Common myeloid progenitor, CD34-positive (primary cell): ENCODE measurements at regions of chr13 and their contacts with region 1.

Region 1: DNA sequence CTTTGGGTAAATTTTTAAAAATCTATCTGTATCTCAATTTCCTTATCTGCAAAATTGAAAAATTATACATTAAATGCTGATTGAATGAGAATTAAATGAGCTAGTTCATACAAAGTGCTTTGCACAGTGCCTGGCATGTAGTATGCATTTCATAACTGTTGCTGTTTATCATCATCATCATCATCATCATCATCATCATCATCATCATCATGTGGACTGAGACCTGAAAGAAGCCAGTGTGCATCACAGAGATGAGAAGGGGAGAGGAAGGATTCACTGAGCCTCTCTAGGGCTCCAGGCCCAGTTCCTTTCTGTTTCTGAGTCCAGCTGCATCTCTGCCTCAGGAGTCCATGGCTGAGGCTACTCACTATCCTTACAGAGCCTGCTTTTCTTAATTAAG is 6.9 kb upstream of the ZC3H13 start:
- DNase-seq: no peak
- H3K4me3 ChIP-seq: no peak overlapping the region
- H3K27ac ChIP-seq: no peak overlapping the region
- H3K4me1 ChIP-seq: peaks cover 0 to 11% (median 6%) of the 10 kb centered on the region in 4 experiments
- H3K27me3 ChIP-seq: no peaks in the 10 kb centered on the region

Region 2: DNA sequence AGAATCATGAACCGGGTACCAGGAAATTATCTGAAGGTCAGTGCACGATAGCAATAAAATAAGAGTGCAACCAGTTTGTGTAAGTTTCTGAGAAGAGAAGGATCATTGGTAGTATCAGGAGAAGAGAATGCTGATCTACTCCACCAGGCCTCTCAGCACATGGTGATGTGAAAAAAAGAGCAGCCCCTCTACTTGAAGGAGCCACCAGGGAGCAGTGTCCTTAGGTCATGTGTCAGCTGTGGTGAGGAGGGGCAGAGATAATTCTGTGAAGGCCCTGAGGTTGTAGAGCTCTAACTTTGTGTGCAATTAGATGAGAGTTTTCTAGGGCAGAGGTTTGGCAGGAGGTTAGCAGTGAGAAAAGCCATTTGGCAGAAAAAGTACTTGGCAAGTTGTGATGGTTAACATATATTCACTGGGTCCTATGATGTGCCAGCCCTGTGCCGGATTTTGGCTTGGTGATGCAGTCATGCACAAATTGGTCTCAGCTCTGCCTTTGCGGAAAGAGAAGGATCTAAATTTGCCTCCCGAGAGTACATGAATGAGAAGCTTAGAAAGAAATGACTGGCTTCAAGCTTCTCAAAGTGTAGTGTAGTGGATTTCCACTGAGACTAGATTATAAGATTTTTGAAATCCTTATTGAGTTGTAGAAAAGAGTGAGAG is 12.3 kb after region 1 on chr13:
- CTCF ChIA-PET with region 1: interaction called, 10 read pairs
- POLR2A ChIA-PET with region 1: no interaction called
- DNase-seq: peak in 2 of 3 donors; percentile 50 to 67
- H3K4me3 ChIP-seq: no peak overlapping the region
- H3K27ac ChIP-seq: no peak overlapping the region
- H3K4me1 ChIP-seq: no peaks in the 10 kb centered on the region
- H3K27me3 ChIP-seq: no peaks in the 10 kb centered on the region

Region 3: GRCh38 chr13:46086990-46087389 is 27.6 kb after region 1 on chr13:
- CTCF ChIA-PET with region 1: no interaction called
- POLR2A ChIA-PET with region 1: no interaction called
- DNase-seq: no peak
- H3K4me3 ChIP-seq: no peak overlapping the region
- H3K27ac ChIP-seq: no peak overlapping the region
- H3K4me1 ChIP-seq: peaks cover 0 to 7% (median 2%) of the 10 kb centered on the region in 4 experiments
- H3K27me3 ChIP-seq: no peaks in the 10 kb centered on the region

Region 4: DNA sequence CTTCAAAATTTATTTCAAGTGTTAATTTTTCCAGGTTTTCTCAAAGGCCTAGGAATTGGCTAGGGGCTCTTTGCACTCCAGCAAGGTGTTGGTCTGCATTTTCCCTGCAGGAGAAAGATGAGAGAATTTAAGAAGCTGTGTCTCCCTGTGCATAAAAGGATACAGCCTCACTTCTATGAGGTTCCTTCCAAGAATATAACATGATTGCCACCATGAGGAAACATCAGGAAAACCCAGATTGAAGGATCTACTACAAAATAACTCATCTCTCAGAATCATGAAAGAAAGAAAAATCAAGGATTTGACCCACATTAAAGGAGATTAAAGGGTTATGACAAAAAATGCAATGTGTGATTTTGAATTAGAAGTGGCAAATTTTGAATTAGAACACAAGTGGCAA is 257.7 kb after region 1 on chr13:
- CTCF ChIA-PET with region 1: no interaction called
- POLR2A ChIA-PET with region 1: no interaction called
- DNase-seq: no peak
- H3K4me3 ChIP-seq: no peak overlapping the region
- H3K27ac ChIP-seq: no peak overlapping the region
- H3K4me1 ChIP-seq: peaks cover 0 to 3% (median 1%) of the 10 kb centered on the region in 4 experiments
- H3K27me3 ChIP-seq: no peaks in the 10 kb centered on the region